HCT116 (cell line): ENCODE measurements at regions of chr7 and their contacts with region 1.

Region 1: DNA sequence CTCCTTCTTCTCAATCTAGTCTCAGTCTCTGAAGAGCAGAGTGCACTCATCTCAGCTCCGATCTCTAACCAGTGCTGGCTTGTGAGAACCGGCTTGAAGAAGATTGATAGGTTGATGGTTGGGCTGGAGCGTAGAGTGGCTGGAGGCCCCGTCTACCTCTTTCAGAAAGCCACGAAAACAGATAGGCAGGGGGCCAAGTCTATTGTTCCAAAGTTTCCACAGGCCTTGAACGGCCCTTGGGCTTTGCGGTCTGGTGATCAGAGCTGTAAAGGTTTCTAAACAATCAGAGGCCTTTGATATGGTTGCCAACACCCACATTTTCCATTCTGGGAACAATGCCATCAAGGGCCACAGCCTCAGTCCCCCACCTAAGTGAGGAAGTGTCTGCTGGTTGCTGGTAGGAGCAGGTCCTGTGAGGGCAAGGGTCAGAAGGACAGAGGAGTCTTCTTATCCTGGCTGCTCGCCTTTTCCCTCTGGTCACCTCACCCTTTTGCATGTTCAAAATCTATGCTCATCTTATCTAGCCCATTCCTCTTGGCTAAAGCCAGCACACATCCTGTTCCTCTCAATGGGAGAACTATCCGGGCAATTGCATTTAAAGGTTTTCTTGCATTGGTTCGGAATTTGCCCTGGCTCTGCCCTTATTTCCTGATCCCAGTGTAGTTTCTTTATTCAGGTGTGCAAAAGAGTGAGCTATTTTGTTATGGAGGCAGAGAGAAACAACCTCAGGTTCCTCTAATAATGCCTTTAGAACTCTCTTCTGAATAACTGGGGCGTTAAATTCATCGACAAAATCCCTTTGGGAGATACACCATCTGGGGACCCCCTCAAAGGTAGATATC is 70.3 kb upstream of the KMT2E start:
- DNase-seq: peak; percentile 94
- ATAC-seq: peak; percentile 81
- H3K4me3 ChIP-seq: no peak overlapping the region
- H3K27ac ChIP-seq: peak overlapping the region; percentile 7; the same call in 1 of the 2 replicates
- H3K4me1 ChIP-seq: peaks cover 27 to 35% of the 10 kb centered on the region in 2 experiments
- H3K27me3 ChIP-seq: peaks cover 4% of the 10 kb centered on the region; the same call in 1 of the 2 replicates
- CTCF ChIP-seq: no peak
- POLR2A ChIP-seq: no peak
- RAD21 ChIP-seq: no peak

Region 2: GRCh38 chr7:104933521-104933988 is 10.2 kb before region 1 on chr7:
- CTCF ChIA-PET with region 1: no interaction called
- POLR2A ChIA-PET with region 1: no interaction called
- RAD21 ChIA-PET with region 1: no interaction called
- intact Hi-C with region 1: no loop called
- DNase-seq: no peak
- ATAC-seq: no peak
- H3K4me3 ChIP-seq: no peak overlapping the region
- H3K27ac ChIP-seq: no peak overlapping the region
- H3K4me1 ChIP-seq: no peaks in the 10 kb centered on the region
- H3K27me3 ChIP-seq: peaks cover 3% of the 10 kb centered on the region; the same call in 1 of the 2 replicates
- CTCF ChIP-seq: no peak
- POLR2A ChIP-seq: no peak
- RAD21 ChIP-seq: no peak

Region 3: GRCh38 chr7:105003275-105003674 is 59.6 kb after region 1 on chr7:
- CTCF ChIA-PET with region 1: no interaction called
- POLR2A ChIA-PET with region 1: no interaction called
- RAD21 ChIA-PET with region 1: no interaction called
- intact Hi-C with region 1: no loop called
- DNase-seq: no peak
- ATAC-seq: peak; percentile 72; the same call in 1 of the 2 replicates
- H3K4me3 ChIP-seq: no peak overlapping the region
- H3K27ac ChIP-seq: peak overlapping the region; percentile 14; the same call in 1 of the 2 replicates
- H3K4me1 ChIP-seq: peaks cover 12 to 32% of the 10 kb centered on the region in 2 experiments
- H3K27me3 ChIP-seq: no peaks in the 10 kb centered on the region
- CTCF ChIP-seq: no peak
- POLR2A ChIP-seq: no peak
- RAD21 ChIP-seq: no peak

Region 4: GRCh38 chr7:105013221-105013815 is 69.6 kb after region 1 on chr7:
- CTCF ChIA-PET with region 1: no interaction called
- POLR2A ChIA-PET with region 1: no interaction called
- RAD21 ChIA-PET with region 1: interaction called in 1 of 2 experiments, 3 read pairs
- intact Hi-C with region 1: loop called (anchors 2 kb)
- DNase-seq: peak; percentile 77
- ATAC-seq: peak; percentile 69
- H3K4me3 ChIP-seq: peak overlapping the region; percentile 89 to 95
- H3K27ac ChIP-seq: peak overlapping the region; percentile 98
- H3K4me1 ChIP-seq: peaks cover 11 to 49% of the 10 kb centered on the region in 2 experiments; a peak in 3 of 4 replicates
- H3K27me3 ChIP-seq: no peaks in the 10 kb centered on the region
- CTCF ChIP-seq: peak in 2 of 3 experiments; percentile 53 to 57; a peak in 4 of 6 replicates
- POLR2A ChIP-seq: peak; percentile 39
- RAD21 ChIP-seq: no peak

Region 5: GRCh38 chr7:105198223-105198622 is 254.5 kb after region 1 on chr7:
- CTCF ChIA-PET with region 1: no interaction called
- POLR2A ChIA-PET with region 1: no interaction called
- RAD21 ChIA-PET with region 1: no interaction called
- intact Hi-C with region 1: no loop called
- DNase-seq: no peak
- ATAC-seq: no peak
- H3K4me3 ChIP-seq: no peak overlapping the region
- H3K27ac ChIP-seq: no peak overlapping the region
- H3K4me1 ChIP-seq: no peaks in the 10 kb centered on the region
- H3K27me3 ChIP-seq: no peaks in the 10 kb centered on the region
- CTCF ChIP-seq: no peak
- POLR2A ChIP-seq: no peak
- RAD21 ChIP-seq: no peak

Region 6: GRCh38 chr7:105480931-105481330 is 537.2 kb after region 1 on chr7:
- CTCF ChIA-PET with region 1: no interaction called
- POLR2A ChIA-PET with region 1: no interaction called
- RAD21 ChIA-PET with region 1: no interaction called
- intact Hi-C with region 1: no loop called
- DNase-seq: no peak
- ATAC-seq: no peak
- H3K4me3 ChIP-seq: no peak overlapping the region
- H3K27ac ChIP-seq: no peak overlapping the region
- H3K4me1 ChIP-seq: no peaks in the 10 kb centered on the region
- H3K27me3 ChIP-seq: no peaks in the 10 kb centered on the region
- CTCF ChIP-seq: no peak
- POLR2A ChIP-seq: no peak
- RAD21 ChIP-seq: no peak